ENCODE measurements at regions of chr14 and their contacts with region 1.

Region 1: GRCh38 chr14:64510825-64511671 is 6.5 kb downstream of the ZBTB1 start:
- DNase-seq: peak; percentile 25 to 87 (median 72)
- ATAC-seq: peak; percentile 60
- H3K4me3 ChIP-seq: no peak overlapping the region
- H3K4me3 Mint-ChIP-seq: peak overlapping the region; percentile 40
- H3K27ac ChIP-seq: peak overlapping the region in 1 of 2 experiments; percentile 52
- H3K27ac Mint-ChIP-seq: peak overlapping the region; percentile 42
- H3K4me1 ChIP-seq: peaks cover 62% of the 10 kb centered on the region
- H3K4me1 Mint-ChIP-seq: peaks cover 87% of the 10 kb centered on the region
- H3K27me3 ChIP-seq: no peaks in the 10 kb centered on the region
- H3K27me3 Mint-ChIP-seq: no peaks in the 10 kb centered on the region
- CTCF ChIP-seq: peak; percentile 87

Region 2: DNA sequence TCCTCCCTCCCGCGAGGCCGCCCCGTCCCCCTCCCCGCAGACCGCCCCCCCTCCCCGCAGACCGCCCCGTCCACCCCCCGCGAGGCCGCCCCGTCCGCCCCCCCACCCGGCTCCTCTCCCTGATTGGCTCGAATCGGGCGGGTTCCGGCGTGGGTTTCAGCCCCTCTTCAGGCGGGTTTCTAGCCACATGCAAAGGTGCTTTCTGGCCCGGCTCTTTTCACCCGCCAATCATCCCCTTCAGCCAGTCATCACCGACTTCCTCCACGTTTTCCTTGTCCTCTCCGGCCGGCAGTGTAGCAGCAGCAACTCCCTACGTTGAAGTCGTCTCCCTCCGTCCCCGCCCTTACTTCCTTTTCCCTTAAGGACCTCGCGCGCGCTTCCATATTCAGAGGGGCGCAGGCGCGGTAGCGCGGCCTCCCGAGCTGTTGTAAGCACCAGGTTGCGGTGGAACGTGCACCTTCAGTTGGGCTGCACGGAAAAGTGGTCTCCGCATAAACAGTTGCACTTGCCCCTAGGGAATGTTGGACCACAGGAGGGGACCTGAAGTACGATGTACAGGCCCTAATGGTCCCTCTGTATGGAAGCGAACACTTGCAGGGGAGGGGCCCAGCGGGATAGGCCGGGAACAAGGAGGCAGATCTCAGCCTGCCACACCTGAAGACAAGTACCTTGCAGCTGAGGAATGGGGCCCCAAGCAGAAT is 172.3 kb before region 1 on chr14:
- CTCF ChIA-PET with region 1: interaction called, 15 read pairs
- POLR2A ChIA-PET with region 1: interaction called, 18 read pairs
- intact Hi-C with region 1: no loop called
- DNase-seq: peak; percentile 54 to 93 (median 85)
- ATAC-seq: peak; percentile 79
- H3K4me3 ChIP-seq: peak overlapping the region; percentile 67 to 87
- H3K4me3 Mint-ChIP-seq: peak overlapping the region; percentile 97
- H3K27ac ChIP-seq: peak overlapping the region; percentile 38 to 58
- H3K27ac Mint-ChIP-seq: peak overlapping the region; percentile 96
- H3K4me1 ChIP-seq: peaks cover 19% of the 10 kb centered on the region
- H3K4me1 Mint-ChIP-seq: peaks cover 26% of the 10 kb centered on the region
- H3K27me3 ChIP-seq: no peaks in the 10 kb centered on the region
- H3K27me3 Mint-ChIP-seq: no peaks in the 10 kb centered on the region
- CTCF ChIP-seq: no peak

Region 3: GRCh38 chr14:64423987-64424386 is 87.1 kb before region 1 on chr14:
- CTCF ChIA-PET with region 1: interaction called, 31 read pairs
- POLR2A ChIA-PET with region 1: no interaction called
- intact Hi-C with region 1: no loop called
- DNase-seq: no peak
- ATAC-seq: no peak
- H3K4me3 ChIP-seq: no peak overlapping the region
- H3K4me3 Mint-ChIP-seq: no peak overlapping the region
- H3K27ac ChIP-seq: no peak overlapping the region
- H3K27ac Mint-ChIP-seq: no peak overlapping the region
- H3K4me1 ChIP-seq: no peaks in the 10 kb centered on the region
- H3K4me1 Mint-ChIP-seq: no peaks in the 10 kb centered on the region
- H3K27me3 ChIP-seq: no peaks in the 10 kb centered on the region
- H3K27me3 Mint-ChIP-seq: no peaks in the 10 kb centered on the region
- CTCF ChIP-seq: no peak

Region 4: GRCh38 chr14:64491637-64492036 is 19.4 kb before region 1 on chr14:
- CTCF ChIA-PET with region 1: interaction called, 56 read pairs
- POLR2A ChIA-PET with region 1: interaction called, 72 read pairs
- intact Hi-C with region 1: loop called in 1 of 2 experiments (anchors 2 kb)
- DNase-seq: no peak
- ATAC-seq: no peak
- H3K4me3 ChIP-seq: no peak overlapping the region
- H3K4me3 Mint-ChIP-seq: no peak overlapping the region
- H3K27ac ChIP-seq: no peak overlapping the region
- H3K27ac Mint-ChIP-seq: no peak overlapping the region
- H3K4me1 ChIP-seq: peaks cover 39% of the 10 kb centered on the region
- H3K4me1 Mint-ChIP-seq: peaks cover 62% of the 10 kb centered on the region
- H3K27me3 ChIP-seq: no peaks in the 10 kb centered on the region
- H3K27me3 Mint-ChIP-seq: no peaks in the 10 kb centered on the region
- CTCF ChIP-seq: no peak

Region 5: DNA sequence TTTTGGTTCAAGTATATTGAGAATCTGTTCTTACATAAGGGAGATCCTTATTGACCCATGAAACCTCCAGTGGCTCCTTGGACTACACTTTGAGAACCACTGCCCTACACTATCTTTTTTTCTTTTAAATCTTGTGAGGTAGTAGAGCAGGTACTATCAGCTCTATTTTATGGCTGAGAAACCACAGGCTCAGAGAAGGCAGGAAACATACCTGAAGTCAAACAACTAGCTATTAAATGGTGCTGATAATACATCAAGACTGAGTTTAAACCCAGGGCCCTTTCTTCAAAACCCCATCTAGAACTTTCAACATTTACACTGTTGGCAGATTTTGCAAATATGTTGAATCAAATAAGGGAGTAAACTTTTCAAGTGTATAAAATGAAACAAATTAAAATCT is 14.3 kb before region 1 on chr14:
- CTCF ChIA-PET with region 1: interaction called, 56 read pairs
- POLR2A ChIA-PET with region 1: interaction called, 5 read pairs
- intact Hi-C with region 1: loop called in 1 of 2 experiments (anchors 2 kb)
- DNase-seq: no peak
- ATAC-seq: no peak
- H3K4me3 ChIP-seq: no peak overlapping the region
- H3K4me3 Mint-ChIP-seq: peak overlapping the region; percentile 52
- H3K27ac ChIP-seq: peak overlapping the region in 1 of 2 experiments; percentile 7
- H3K27ac Mint-ChIP-seq: peak overlapping the region; percentile 88
- H3K4me1 ChIP-seq: peaks cover 71% of the 10 kb centered on the region
- H3K4me1 Mint-ChIP-seq: peaks cover 76% of the 10 kb centered on the region
- H3K27me3 ChIP-seq: no peaks in the 10 kb centered on the region
- H3K27me3 Mint-ChIP-seq: no peaks in the 10 kb centered on the region
- CTCF ChIP-seq: no peak

Region 6: DNA sequence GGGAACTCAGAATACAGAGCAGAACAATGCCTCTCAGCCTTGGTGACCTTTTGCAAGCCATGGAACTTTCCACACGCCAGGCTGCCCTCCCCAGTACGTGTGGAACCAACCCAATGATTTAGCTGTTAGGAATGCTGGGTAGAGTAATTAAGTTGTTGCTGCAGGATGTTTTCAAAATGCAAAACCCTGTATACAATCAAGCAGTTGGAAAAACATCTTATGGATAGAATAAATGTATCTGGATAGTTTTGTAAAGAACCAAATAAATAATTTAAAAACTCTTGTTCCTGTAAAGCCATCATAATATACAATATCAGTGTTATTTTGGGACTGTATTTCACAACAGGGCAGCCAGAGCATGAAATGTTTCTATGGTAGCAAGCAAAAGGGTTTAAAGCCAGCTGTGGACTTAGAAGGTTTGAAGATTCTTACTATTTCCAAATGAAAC is 58.2 kb after region 1 on chr14:
- CTCF ChIA-PET with region 1: no interaction called
- POLR2A ChIA-PET with region 1: no interaction called
- intact Hi-C with region 1: no loop called
- DNase-seq: no peak
- ATAC-seq: no peak
- H3K4me3 ChIP-seq: no peak overlapping the region
- H3K4me3 Mint-ChIP-seq: no peak overlapping the region
- H3K27ac ChIP-seq: no peak overlapping the region
- H3K27ac Mint-ChIP-seq: no peak overlapping the region
- H3K4me1 ChIP-seq: no peaks in the 10 kb centered on the region
- H3K4me1 Mint-ChIP-seq: no peaks in the 10 kb centered on the region
- H3K27me3 ChIP-seq: no peaks in the 10 kb centered on the region
- H3K27me3 Mint-ChIP-seq: peaks cover 3% of the 10 kb centered on the region
- CTCF ChIP-seq: no peak

Measured in CD8-positive, alpha-beta T cell (primary cell).